SK-N-SH (cell line): ENCODE measurements at regions of chr17 and their contacts with region 1.

Region 1: DNA sequence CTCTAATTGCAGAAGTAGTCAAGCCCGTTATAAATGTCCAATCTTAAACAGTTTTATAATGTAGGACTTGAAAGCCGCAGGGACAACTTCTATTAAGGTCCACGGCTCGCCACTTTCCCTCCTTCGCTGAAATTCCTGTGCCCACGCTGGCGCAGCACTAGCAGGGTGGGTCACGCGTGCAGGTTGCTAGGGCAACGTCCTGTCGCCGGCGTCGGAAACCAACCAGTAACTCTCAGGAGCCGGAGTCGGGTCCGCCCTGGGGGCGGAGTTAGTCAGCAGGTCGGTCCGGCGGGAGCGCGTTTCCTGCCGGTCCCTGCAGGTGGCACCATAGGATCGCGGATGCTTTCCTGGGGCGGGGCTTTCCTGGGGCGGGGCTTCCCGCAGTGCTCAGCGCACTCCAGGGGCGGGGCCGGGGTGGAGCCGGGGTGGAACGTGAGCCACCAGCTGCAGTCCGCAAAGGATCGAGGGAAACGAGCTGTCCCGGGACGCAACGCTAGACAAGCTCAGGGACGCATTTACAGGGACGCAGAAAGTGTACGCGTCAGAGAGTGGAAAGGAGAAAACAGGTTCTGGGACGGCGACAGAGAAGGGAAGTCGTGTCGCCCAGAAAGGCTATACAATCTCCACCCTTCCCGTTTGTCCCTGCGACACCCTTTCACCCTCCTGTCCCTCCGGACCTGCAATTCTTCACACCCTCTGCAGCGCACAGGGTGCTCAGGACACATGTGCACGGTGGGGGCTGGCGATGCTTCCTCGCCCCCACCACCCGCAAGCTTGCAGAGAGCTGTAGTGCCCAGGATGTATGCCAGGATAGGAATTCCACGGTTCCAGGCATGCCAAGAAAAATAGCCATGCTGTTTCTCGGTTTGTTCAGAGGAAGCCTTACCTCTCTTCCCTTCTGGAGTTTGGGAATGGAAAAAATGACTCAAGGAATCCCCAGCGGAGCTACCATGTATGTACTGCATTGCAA is 12.4 kb downstream of the COPZ2 start:
- DNase-seq: peak; percentile 97
- H3K4me3 ChIP-seq: peak overlapping the region; percentile 50 to 78
- H3K27ac ChIP-seq: peak overlapping the region; percentile 43 to 68
- H3K4me1 ChIP-seq: peaks cover 25 to 33% of the 10 kb centered on the region in 2 experiments; a peak in 3 of 4 replicates
- H3K27me3 ChIP-seq: no peaks in the 10 kb centered on the region
- CTCF ChIP-seq: peak; percentile 90
- EP300 ChIP-seq: no peak
- RAD21 ChIP-seq: peak; percentile 98

Region 2: DNA sequence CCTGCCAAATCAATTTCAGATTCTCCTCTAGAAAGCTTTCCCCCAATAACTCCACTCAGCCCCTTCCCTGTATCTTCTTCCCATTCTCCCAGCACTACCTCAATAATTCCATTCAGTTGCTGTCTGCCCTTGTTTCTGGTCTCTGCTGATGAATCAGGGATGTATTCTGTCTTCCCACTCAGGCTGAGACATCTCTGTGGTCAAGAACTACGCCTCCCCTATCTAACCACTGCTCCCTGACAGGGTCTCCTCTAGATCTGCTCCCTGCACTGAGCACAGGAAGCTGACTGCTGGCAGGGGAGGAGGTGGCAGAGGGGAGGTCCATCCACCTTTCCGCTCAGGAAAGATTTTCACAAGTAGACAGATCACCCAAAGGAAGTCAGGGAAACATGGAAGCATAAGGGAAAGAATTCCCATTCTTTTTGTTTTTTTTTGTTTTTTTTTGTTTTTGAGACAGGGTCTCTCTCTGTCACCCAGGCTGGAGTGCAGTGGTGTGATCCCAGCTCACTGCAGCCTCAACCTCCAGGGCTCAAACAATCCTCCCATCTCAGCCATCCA is 146.1 kb before region 1 on chr17:
- CTCF ChIA-PET with region 1: no interaction called
- POLR2A ChIA-PET with region 1: no interaction called
- DNase-seq: no peak
- H3K4me3 ChIP-seq: no peak overlapping the region
- H3K27ac ChIP-seq: no peak overlapping the region
- H3K4me1 ChIP-seq: peaks cover 0 to 8% of the 10 kb centered on the region in 2 experiments; a peak in 1 of 4 replicates
- H3K27me3 ChIP-seq: peaks cover 34% of the 10 kb centered on the region; the same call in 1 of the 2 replicates
- CTCF ChIP-seq: no peak
- EP300 ChIP-seq: no peak
- RAD21 ChIP-seq: no peak

Region 3: DNA sequence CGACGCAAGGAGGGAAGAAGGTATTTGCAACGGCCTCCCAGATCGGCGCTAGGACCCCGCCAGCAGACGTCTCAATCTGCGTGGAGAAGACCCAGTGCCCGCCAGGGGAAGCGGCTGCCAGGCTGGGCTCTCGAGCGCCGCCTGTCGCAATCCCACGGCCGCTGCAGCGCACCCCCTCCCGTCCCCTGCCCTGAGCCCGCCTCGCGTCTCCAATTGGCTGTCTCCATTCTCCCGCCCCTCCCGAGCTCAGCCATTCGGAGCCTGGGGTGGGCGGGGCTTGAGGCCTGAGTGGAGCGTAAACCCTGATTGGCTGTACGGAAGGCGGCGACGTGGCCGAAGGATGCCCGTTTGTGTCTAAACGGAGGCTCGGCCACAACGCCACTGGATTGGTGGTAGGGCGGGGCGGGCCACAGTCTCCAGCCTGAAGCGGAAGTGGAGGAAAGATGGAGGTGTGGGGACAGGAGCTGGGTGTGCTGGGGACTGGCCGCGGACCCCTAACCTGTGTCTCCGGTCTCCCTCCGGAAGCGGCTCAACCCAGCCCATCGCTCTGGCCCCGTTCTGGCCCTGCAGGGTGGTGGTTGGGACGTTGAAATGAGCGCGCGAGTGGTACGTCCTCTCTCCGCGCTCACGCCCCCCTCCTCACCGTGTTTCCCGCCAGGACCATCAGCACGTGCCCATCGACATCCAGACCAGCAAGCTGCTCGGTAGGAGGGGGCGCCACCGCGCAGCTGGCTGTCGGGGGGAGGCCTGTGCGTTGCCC is 54.3 kb before region 1 on chr17 and contains the start of gene CDK5RAP3:
- CTCF ChIA-PET with region 1: interaction called, 1,752 read pairs
- POLR2A ChIA-PET with region 1: interaction called, 4 read pairs
- DNase-seq: peak; percentile 99
- H3K4me3 ChIP-seq: peak within 1 kb of the TSS; percentile 79 to 90
- H3K27ac ChIP-seq: peak within 1 kb of the TSS; percentile 54 to 83
- H3K4me1 ChIP-seq: peaks cover 20 to 25% of the 10 kb centered on the region in 2 experiments; a peak in 3 of 4 replicates
- H3K27me3 ChIP-seq: no peaks in the 10 kb centered on the region
- CTCF ChIP-seq: peak; percentile 99
- EP300 ChIP-seq: no peak; a peak in 1 of 4 replicates
- RAD21 ChIP-seq: peak; percentile 69
- polyA plus RNA-seq, gene CDK5RAP3: 208 and 288 TPM in 2 replicates

Region 4: DNA sequence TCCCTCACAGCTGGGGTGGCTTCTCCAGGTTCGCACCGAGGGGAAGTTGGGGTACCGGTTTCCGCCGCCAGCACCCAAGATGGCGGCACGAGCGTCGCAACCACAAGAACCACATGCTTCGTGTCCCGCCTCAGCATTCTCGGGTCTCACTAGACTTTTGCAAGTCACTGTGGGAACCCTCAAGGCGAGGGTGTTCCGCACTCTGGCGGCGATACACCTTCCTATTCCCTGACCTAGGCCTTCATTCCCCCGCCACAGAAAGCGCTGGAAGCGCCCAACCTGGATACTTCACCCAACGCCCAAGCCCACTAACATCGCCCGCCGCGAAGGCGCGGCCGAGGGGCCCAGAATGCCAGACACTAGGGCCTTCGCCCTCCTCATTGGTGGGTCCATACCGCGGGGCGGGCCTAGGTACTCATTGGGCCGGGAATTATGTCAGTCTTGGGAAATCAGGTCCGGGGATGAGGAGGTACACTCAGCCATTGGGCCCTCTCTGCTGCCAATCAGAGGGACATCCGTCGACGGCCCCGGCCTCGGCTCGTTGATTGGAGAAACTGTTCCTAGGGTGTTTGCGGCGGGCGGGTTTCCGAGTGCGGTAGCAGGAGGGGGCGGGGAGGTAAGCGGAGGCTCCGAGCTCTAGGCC is 22.6 kb after region 1 on chr17 and contains the start of gene NFE2L1:
- CTCF ChIA-PET with region 1: interaction called, 1,200 read pairs
- POLR2A ChIA-PET with region 1: interaction called, 27 read pairs
- DNase-seq: peak; percentile 97
- H3K4me3 ChIP-seq: peak within 1 kb of the TSS; percentile 77 to 90
- H3K27ac ChIP-seq: peak within 1 kb of the TSS; percentile 95 to 98
- H3K4me1 ChIP-seq: peaks cover 42 to 46% of the 10 kb centered on the region in 2 experiments
- H3K27me3 ChIP-seq: no peaks in the 10 kb centered on the region
- CTCF ChIP-seq: no peak
- EP300 ChIP-seq: peak in 1 of 2 experiments; percentile 14; a peak in 1 of 4 replicates
- RAD21 ChIP-seq: no peak
- polyA plus RNA-seq, gene NFE2L1: 159 and 174 TPM in 2 replicates

Region 5: GRCh38 chr17:48101012-48101720 is 75.9 kb after region 1 on chr17 and contains the start of gene CBX1:
- CTCF ChIA-PET with region 1: interaction called, 64 read pairs
- POLR2A ChIA-PET with region 1: interaction called, 9 read pairs
- DNase-seq: peak; percentile 98
- H3K4me3 ChIP-seq: peak within 1 kb of the TSS; percentile 66 to 90
- H3K27ac ChIP-seq: peak within 1 kb of the TSS; percentile 81 to 91
- H3K4me1 ChIP-seq: peaks cover 3 to 6% of the 10 kb centered on the region in 2 experiments; a peak in 2 of 4 replicates
- H3K27me3 ChIP-seq: no peaks in the 10 kb centered on the region
- CTCF ChIP-seq: no peak; the same call in 1 of the 2 replicates
- EP300 ChIP-seq: no peak; a peak in 1 of 4 replicates
- RAD21 ChIP-seq: no peak
- polyA plus RNA-seq, gene CBX1: 102 and 112 TPM in 2 replicates

Region 6: DNA sequence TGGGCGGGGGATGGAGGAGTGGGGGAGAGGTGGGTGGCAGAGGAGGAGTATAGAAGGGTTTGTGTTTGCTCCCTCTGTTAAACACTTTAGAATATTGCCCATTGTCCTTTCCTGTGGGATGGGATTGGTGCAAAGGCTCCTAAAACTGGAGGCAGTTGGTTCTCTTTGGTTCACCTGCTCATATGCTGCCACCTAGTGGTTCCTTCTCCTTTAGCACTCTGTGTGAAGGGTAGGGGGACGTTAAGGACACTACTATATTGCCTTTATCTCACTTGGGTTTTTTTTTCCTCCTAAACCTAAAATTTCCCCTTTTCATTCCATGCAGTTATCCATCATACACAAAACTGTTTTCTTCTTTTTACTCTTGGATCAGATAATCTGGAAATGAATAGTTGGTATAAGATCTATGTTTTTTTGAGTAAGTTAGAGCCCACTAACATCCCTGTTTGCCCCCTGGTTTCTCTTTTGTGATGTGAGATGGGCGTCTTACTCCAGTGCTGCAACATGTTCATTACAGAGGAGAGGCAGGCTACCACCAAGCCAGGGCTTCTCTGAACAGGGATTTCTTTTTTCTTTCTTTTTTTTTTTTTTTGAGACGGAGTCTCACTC is 106.1 kb after region 1 on chr17:
- CTCF ChIA-PET with region 1: interaction called, 232 read pairs
- POLR2A ChIA-PET with region 1: interaction called, 3 read pairs
- DNase-seq: peak; percentile 82
- H3K4me3 ChIP-seq: no peak overlapping the region; a peak in 1 of 4 replicates
- H3K27ac ChIP-seq: no peak overlapping the region
- H3K4me1 ChIP-seq: peaks cover 7 to 17% of the 10 kb centered on the region in 2 experiments; a peak in 2 of 4 replicates
- H3K27me3 ChIP-seq: peaks cover 8% of the 10 kb centered on the region; the same call in 1 of the 2 replicates
- CTCF ChIP-seq: peak; percentile 99
- EP300 ChIP-seq: no peak
- RAD21 ChIP-seq: peak; percentile 99